IMR-90 (cell line): ENCODE measurements at regions of chr9 and their contacts with region 1.

Region 1: DNA sequence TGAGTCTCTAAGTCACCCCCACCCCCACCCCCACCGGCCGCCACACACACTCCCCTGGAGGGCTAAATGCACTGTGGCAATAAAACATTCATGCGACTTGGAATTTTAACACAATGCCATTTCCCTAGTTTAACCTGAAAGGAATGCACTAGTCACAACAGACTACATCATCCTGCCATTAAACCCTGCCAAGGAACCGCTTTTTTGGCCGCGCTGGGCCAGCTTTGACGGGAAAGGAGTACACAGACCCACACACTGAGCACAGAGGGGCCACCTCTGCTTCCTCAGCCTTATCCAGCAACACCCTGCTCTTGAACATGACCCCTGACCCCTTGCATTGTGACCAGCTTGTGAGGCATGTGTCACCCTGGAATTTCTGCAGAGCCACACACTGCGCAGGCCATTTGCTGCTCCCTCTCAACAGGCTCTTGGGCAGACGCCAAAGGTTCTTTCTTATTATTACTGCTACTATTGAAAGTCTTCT is 165.3 kb downstream of the BNC2 start:
- DNase-seq: peak; percentile 97
- ATAC-seq: peak; percentile 80
- H3K4me3 ChIP-seq: peak overlapping the region; percentile 42
- H3K27ac ChIP-seq: peak overlapping the region; percentile 99
- H3K4me1 ChIP-seq: peaks cover 22% of the 10 kb centered on the region
- H3K27me3 ChIP-seq: no peaks in the 10 kb centered on the region
- CTCF ChIP-seq: no peak
- POLR2A ChIP-seq: no peak
- RAD21 ChIP-seq: no peak; the same call in 1 of the 2 replicates

Region 2: DNA sequence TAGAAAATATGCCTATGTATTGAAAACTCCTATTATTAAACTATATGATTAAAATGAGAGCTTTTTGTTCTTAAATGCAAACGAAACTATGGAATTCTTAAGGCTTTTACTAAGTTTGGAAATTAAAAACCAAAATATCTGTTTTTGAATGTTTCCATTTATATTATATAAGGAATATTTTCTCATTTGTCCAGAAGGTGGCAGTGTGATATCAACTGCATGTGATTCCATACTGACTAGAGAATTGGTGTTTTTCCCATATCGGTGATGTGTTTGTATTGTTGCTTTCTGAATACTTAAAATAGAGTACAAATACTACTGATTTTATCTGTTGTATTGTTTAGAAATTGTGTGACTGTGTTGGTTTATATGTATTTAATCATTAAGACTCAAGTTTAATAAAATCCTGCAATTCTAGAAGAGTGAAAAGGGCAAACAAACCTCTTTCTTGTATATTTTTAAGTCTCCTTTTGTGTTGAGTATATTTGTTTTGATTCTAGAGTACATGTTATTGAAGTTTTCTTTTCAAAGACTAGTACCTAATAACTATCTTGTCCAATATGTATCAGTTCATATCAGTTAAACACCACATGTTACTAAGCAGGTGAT is 831.5 kb before region 1 on chr9:
- CTCF ChIA-PET with region 1: no interaction called
- POLR2A ChIA-PET with region 1: no interaction called
- dilution Hi-C with region 1: no loop called
- in situ Hi-C with region 1: no loop called
- intact Hi-C with region 1: loop called (anchors 10 kb)
- DNase-seq: peak; percentile 74
- ATAC-seq: peak; percentile 70; the same call in 1 of the 2 replicates
- H3K4me3 ChIP-seq: no peak overlapping the region
- H3K27ac ChIP-seq: no peak overlapping the region
- H3K4me1 ChIP-seq: no peaks in the 10 kb centered on the region; the same call in 1 of the 2 replicates
- H3K27me3 ChIP-seq: no peaks in the 10 kb centered on the region
- CTCF ChIP-seq: peak; percentile 82
- POLR2A ChIP-seq: no peak
- RAD21 ChIP-seq: peak; percentile 87

Region 3: DNA sequence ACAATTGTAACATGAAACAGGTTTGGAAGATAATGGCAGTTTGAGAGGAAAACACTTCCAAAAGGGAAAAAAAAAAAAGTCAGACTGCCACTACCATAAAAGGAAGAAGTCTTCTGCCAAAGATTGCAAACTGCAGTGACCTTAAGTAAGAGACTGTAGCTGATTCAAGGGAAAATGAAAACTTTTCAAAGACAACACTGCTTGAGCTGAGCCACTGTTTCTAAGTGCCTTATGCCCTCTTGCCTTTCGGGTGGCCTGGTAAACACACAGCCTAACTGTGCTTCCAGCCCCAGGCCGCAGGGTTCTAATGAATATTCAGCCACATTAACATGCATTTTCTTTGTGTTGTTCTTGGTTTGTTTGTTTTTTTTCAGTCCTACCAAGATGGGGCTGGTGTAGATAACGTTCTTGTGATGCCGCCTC is 189.3 kb before region 1 on chr9:
- CTCF ChIA-PET with region 1: no interaction called
- POLR2A ChIA-PET with region 1: no interaction called
- dilution Hi-C with region 1: no loop called
- in situ Hi-C with region 1: no loop called
- intact Hi-C with region 1: loop called (anchors 5 kb)
- DNase-seq: peak; percentile 84
- ATAC-seq: peak; percentile 81
- H3K4me3 ChIP-seq: no peak overlapping the region
- H3K27ac ChIP-seq: peak overlapping the region; percentile 100
- H3K4me1 ChIP-seq: peaks cover 18% of the 10 kb centered on the region
- H3K27me3 ChIP-seq: no peaks in the 10 kb centered on the region
- CTCF ChIP-seq: no peak
- POLR2A ChIP-seq: no peak
- RAD21 ChIP-seq: no peak

Region 4: DNA sequence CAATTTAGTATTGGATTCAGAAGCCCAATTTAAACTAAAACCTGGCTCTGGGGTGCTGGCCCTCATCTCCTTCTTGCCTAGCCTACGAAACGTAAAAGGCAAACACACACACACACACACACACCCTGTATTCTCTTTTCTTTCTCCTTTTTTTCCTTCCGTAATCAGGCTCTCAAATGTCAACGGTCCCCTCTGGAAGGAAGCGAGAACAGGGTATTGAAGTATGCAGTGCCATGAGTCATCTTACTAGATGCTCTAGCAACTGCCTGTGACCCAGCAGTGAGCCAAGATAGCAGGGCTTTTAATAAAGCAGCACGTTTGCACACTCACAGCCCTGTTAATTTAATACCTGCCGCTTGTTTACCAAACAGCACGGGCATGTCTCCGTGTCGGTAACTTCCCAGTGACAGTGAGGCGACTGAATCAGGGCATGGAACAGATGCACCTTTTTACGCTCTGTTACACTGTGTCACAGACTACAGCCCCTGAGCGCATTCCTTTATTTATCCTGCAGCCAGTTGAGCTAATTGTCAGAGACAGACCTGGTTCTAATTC is 78.5 kb before region 1 on chr9:
- CTCF ChIA-PET with region 1: no interaction called
- POLR2A ChIA-PET with region 1: no interaction called
- dilution Hi-C with region 1: no loop called
- in situ Hi-C with region 1: no loop called
- intact Hi-C with region 1: loop called (anchors 5 kb)
- DNase-seq: peak; percentile 89
- ATAC-seq: peak; percentile 84
- H3K4me3 ChIP-seq: no peak overlapping the region
- H3K27ac ChIP-seq: peak overlapping the region; percentile 42
- H3K4me1 ChIP-seq: peaks cover 26% of the 10 kb centered on the region
- H3K27me3 ChIP-seq: no peaks in the 10 kb centered on the region
- CTCF ChIP-seq: no peak
- POLR2A ChIP-seq: no peak
- RAD21 ChIP-seq: no peak

Region 5: GRCh38 chr9:16653491-16654399 is 51.4 kb before region 1 on chr9:
- CTCF ChIA-PET with region 1: no interaction called
- POLR2A ChIA-PET with region 1: no interaction called
- dilution Hi-C with region 1: no loop called
- in situ Hi-C with region 1: no loop called
- intact Hi-C with region 1: loop called (anchors 2 kb)
- DNase-seq: no peak
- ATAC-seq: peak; percentile 43
- H3K4me3 ChIP-seq: peak overlapping the region; percentile 45
- H3K27ac ChIP-seq: peak overlapping the region; percentile 49
- H3K4me1 ChIP-seq: peaks cover 16% of the 10 kb centered on the region; the same call in 1 of the 2 replicates
- H3K27me3 ChIP-seq: no peaks in the 10 kb centered on the region
- CTCF ChIP-seq: no peak
- POLR2A ChIP-seq: no peak
- RAD21 ChIP-seq: no peak

Region 6: GRCh38 chr9:16888594-16888993 is 183.4 kb after region 1 on chr9:
- CTCF ChIA-PET with region 1: no interaction called
- POLR2A ChIA-PET with region 1: no interaction called
- dilution Hi-C with region 1: no loop called
- in situ Hi-C with region 1: no loop called
- intact Hi-C with region 1: no loop called
- DNase-seq: no peak
- ATAC-seq: no peak
- H3K4me3 ChIP-seq: no peak overlapping the region
- H3K27ac ChIP-seq: no peak overlapping the region
- H3K4me1 ChIP-seq: peaks cover 10% of the 10 kb centered on the region
- H3K27me3 ChIP-seq: no peaks in the 10 kb centered on the region
- CTCF ChIP-seq: no peak
- POLR2A ChIP-seq: no peak
- RAD21 ChIP-seq: no peak